ENCODE measurements at regions of chr1 and their contacts with region 1.

Region 1: DNA sequence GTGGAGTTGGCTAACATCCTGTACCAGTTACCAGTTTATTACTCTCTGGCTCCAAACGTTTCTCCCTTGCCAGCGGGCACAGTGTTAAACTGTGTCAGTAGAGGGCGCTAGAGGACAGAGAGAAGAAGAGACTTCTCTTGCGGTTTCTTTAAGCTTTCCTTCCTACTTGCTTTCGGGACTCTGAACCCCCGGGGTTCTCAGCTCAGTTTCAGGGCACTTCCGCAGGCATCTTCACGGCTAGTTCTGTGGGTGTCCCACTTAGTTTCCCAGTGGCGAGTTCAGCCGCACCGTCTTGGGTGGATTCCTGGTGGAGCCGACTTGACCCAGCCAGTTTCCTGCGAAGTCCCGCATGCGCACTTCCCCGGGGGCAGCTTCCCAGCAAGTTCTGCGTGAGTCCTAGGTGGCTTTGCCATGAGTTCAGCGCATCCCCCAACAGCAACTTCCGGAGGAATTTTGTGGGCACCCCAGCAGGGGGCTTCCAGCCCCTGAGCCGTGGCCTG is 37.9 kb upstream of the BTG2 start:
- DNase-seq: peak; percentile 88
- H3K4me3 Mint-ChIP-seq: peak overlapping the region; percentile 82
- H3K27ac Mint-ChIP-seq: peak overlapping the region; percentile 89
- H3K4me1 Mint-ChIP-seq: peaks cover 22% of the 10 kb centered on the region
- H3K27me3 Mint-ChIP-seq: no peaks in the 10 kb centered on the region

Region 2: GRCh38 chr1:203197625-203198024 is 69.8 kb before region 1 on chr1:
- CTCF ChIA-PET with region 1: no interaction called
- POLR2A ChIA-PET with region 1: no interaction called
- intact Hi-C with region 1: no loop called
- DNase-seq: no peak
- H3K4me3 Mint-ChIP-seq: no peak overlapping the region
- H3K27ac Mint-ChIP-seq: no peak overlapping the region
- H3K4me1 Mint-ChIP-seq: no peaks in the 10 kb centered on the region
- H3K27me3 Mint-ChIP-seq: peaks cover 12% of the 10 kb centered on the region

Region 3: GRCh38 chr1:203216274-203217138 is 50.9 kb before region 1 on chr1:
- CTCF ChIA-PET with region 1: interaction called, 20 read pairs
- POLR2A ChIA-PET with region 1: no interaction called
- intact Hi-C with region 1: no loop called
- DNase-seq: peak; percentile 56
- H3K4me3 Mint-ChIP-seq: no peak overlapping the region
- H3K27ac Mint-ChIP-seq: no peak overlapping the region
- H3K4me1 Mint-ChIP-seq: no peaks in the 10 kb centered on the region
- H3K27me3 Mint-ChIP-seq: peaks cover 8% of the 10 kb centered on the region

Region 4: DNA sequence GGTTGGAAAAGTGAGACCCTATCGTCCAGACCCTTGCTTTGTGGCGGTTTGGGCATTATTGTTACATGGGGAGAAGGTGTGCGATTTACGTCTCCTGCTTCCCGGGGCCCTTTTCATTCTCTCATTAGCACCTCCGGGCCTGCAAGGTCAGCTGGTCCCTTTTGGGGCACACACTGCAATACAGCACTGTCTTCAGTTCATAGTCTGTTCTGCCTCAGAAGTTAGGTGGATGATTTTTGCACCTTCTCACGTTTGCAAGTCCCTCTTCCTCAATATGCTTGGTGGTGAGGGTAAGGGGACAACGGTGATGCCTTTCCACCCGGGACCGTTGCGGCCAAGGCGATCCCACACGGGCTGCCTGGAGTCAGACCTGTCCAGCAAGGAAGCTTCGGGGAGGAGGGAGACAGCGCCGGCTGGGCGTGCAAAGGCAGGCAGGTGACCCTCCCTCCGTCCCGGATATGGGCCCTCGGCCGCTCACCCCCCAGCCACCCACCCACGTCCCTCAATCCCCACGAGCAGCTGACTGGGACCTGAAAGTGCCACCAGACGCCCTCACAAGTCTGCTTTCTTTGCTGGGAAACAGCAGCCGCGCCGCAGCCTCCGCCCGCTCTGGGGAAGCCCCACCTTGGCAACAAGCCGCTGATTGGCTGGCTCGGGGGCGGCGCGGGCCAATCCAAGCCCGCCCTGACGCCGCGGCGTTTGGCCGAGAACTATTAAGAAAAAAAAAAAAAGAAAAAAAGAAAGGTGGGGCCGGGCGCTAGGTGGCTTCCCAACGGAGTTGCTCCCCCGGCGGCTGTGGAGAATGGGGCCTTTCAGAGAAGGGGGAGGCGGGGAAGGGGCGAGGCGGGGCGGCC is 59.7 kb after region 1 on chr1:
- CTCF ChIA-PET with region 1: interaction called, 847 read pairs
- POLR2A ChIA-PET with region 1: interaction called, 5 read pairs
- intact Hi-C with region 1: no loop called
- DNase-seq: peak; percentile 96
- H3K4me3 Mint-ChIP-seq: peak overlapping the region; percentile 75
- H3K27ac Mint-ChIP-seq: peak overlapping the region; percentile 94
- H3K4me1 Mint-ChIP-seq: peaks cover 55% of the 10 kb centered on the region
- H3K27me3 Mint-ChIP-seq: no peaks in the 10 kb centered on the region

Region 5: GRCh38 chr1:203351037-203352013 is 83.9 kb after region 1 on chr1 and contains the start of gene FMOD:
- CTCF ChIA-PET with region 1: interaction called, 847 read pairs
- POLR2A ChIA-PET with region 1: no interaction called
- intact Hi-C with region 1: no loop called
- DNase-seq: peak; percentile 28
- H3K4me3 Mint-ChIP-seq: no peak within 1 kb of the TSS
- H3K27ac Mint-ChIP-seq: no peak within 1 kb of the TSS
- H3K4me1 Mint-ChIP-seq: peaks cover 9% of the 10 kb centered on the region
- H3K27me3 Mint-ChIP-seq: peaks cover 28% of the 10 kb centered on the region
- total RNA-seq, gene FMOD: 0.95 to 1.9 TPM

Region 6: GRCh38 chr1:203480525-203481084 is 213.2 kb after region 1 on chr1:
- CTCF ChIA-PET with region 1: interaction called, 212 read pairs
- POLR2A ChIA-PET with region 1: no interaction called
- intact Hi-C with region 1: no loop called
- DNase-seq: peak; percentile 66
- H3K4me3 Mint-ChIP-seq: no peak overlapping the region
- H3K27ac Mint-ChIP-seq: no peak overlapping the region
- H3K4me1 Mint-ChIP-seq: peaks cover 2% of the 10 kb centered on the region
- H3K27me3 Mint-ChIP-seq: peaks cover 8% of the 10 kb centered on the region

Region 7: DNA sequence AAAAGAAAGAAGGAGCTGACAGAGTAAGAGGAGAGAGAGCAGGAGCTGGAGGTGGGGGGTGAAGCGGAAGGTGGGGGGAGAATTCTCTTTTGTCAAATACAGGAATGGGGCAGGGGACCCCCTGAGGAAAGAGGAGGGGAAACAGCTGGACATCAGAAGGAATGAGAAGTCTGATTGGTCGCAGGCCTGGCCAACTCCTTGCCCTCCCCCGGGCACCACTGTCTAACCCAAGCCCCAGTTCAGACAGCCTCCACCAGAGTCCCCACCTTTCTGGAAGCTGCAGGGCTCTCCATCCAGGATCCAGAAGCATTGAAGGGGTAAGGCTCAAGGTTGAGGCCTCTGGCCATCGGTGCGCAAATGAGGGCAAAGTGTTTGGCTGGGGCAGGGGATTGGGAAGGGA is 226.5 kb after region 1 on chr1 and contains the start of gene OPTC:
- CTCF ChIA-PET with region 1: interaction called, 212 read pairs
- POLR2A ChIA-PET with region 1: no interaction called
- intact Hi-C with region 1: no loop called
- DNase-seq: no peak
- H3K4me3 Mint-ChIP-seq: no peak within 1 kb of the TSS
- H3K27ac Mint-ChIP-seq: no peak within 1 kb of the TSS
- H3K4me1 Mint-ChIP-seq: no peaks in the 10 kb centered on the region
- H3K27me3 Mint-ChIP-seq: peaks cover 6% of the 10 kb centered on the region
- total RNA-seq, gene OPTC: not detected

Region 8: GRCh38 chr1:203702130-203702577 is 434.8 kb after region 1 on chr1:
- CTCF ChIA-PET with region 1: interaction called, 12 read pairs
- POLR2A ChIA-PET with region 1: no interaction called
- intact Hi-C with region 1: no loop called
- DNase-seq: peak; percentile 69
- H3K4me3 Mint-ChIP-seq: no peak overlapping the region
- H3K27ac Mint-ChIP-seq: peak overlapping the region; percentile 75
- H3K4me1 Mint-ChIP-seq: peaks cover 2% of the 10 kb centered on the region
- H3K27me3 Mint-ChIP-seq: no peaks in the 10 kb centered on the region

Measured in activated CD4-positive, alpha-beta memory T cell treated with anti-CD3 and anti-CD28 coated beads for 36 hours (primary cell).